ENCODE measurements at regions of chr11 and their contacts with region 1.

Region 1: GRCh38 chr11:77187776-77188632 is 60.0 kb downstream of the MYO7A start:
- DNase-seq: peak; percentile 91
- H3K4me3 ChIP-seq: no peak overlapping the region
- H3K27ac ChIP-seq: peak overlapping the region; percentile 36
- H3K4me1 ChIP-seq: peaks cover 9% of the 10 kb centered on the region
- H3K27me3 ChIP-seq: no peaks in the 10 kb centered on the region
- CTCF ChIP-seq: peak; percentile 85

Region 2: DNA sequence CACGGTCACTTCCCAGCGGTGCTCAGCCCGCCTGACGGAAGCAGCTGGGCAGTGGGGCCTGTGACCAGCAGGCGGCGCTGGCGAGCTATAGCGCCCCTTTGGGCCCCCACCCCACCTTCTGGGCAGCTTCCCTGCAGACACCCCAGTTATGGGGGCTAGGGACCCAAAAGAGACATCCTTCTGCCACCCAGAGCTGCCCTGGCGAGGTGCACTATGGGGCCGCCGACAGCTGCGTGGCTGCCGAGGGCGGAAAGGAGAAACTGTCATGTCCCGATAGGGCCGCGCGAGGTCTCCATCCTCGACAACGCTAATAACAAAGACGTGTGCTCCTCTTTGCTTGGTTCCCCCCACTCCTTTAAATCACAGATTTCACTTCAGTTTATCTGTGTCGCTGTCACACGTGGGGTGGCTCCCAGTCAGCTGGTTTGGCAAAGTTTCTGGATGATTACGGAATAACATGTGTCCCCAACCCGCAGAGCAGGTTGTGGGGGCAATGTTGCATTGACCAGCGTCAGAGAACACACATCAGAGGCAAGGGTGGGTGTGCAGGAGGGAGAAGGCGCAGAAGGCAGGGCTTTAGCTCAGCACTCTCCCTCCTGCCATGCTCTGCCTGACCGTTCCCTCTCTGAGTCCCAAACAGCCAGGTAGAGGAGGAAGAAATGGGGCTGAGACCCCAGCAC is 60.6 kb before region 1 on chr11:
- intact Hi-C with region 1: loop called (anchors 2 kb)
- DNase-seq: peak; percentile 70
- H3K4me3 ChIP-seq: peak overlapping the region; percentile 31
- H3K27ac ChIP-seq: no peak overlapping the region
- H3K4me1 ChIP-seq: peaks cover 8% of the 10 kb centered on the region
- H3K27me3 ChIP-seq: no peaks in the 10 kb centered on the region
- CTCF ChIP-seq: peak; percentile 99

Region 3: DNA sequence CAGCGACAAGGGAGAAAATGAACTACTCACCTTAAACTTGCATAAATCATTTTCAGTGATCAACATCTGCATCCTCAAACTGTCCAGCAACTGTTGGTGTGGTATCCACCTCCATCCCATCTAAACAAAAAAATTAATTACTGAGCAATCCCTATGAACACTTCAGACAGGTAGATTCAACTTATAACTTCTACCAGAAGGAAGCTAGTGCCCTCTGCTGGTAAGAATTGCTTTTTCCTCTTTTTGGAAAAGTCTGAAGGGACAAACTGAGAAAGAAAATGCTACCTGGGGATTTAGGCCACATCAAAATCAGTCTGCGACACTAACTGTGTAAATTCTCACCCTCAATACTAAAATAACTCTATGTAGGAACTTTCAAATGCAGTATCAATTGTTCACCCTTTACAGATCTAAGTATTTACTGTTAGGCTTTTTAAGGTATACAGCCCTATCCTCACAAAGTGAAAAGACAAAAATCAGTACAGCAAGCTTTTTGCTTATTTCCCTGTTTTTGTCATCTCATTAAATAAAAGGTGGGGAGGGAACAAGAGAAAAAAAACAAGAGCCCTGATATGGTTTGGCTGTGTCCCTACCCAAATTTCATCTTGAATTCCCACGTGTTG is 431.7 kb after region 1 on chr11:
- intact Hi-C with region 1: loop called (anchors 5 kb)
- DNase-seq: peak; percentile 50
- H3K4me3 ChIP-seq: no peak overlapping the region
- H3K27ac ChIP-seq: no peak overlapping the region
- H3K4me1 ChIP-seq: no peaks in the 10 kb centered on the region
- H3K27me3 ChIP-seq: no peaks in the 10 kb centered on the region
- CTCF ChIP-seq: peak; percentile 74

Measured in colonic mucosa (tissue), 4 donors.